ENCODE measurements at regions of chr3 and their contacts with region 1.

Region 1: GRCh38 chr3:152268555-152269425 is at the start of gene MBNL1:
- DNase-seq: peak; percentile 93
- ATAC-seq: peak; percentile 70
- H3K4me3 ChIP-seq: peak within 1 kb of the TSS; percentile 91 to 100 (median 93)
- H3K4me3 Mint-ChIP-seq: peak within 1 kb of the TSS; percentile 87
- H3K27ac ChIP-seq: peak within 1 kb of the TSS; percentile 86 to 93
- H3K27ac Mint-ChIP-seq: peak within 1 kb of the TSS; percentile 96
- H3K4me1 ChIP-seq: peaks cover 29 to 49% of the 10 kb centered on the region in 2 donors
- H3K4me1 Mint-ChIP-seq: peaks cover 63% of the 10 kb centered on the region
- H3K27me3 ChIP-seq: no peaks in the 10 kb centered on the region
- H3K27me3 Mint-ChIP-seq: no peaks in the 10 kb centered on the region
- CTCF ChIP-seq: no peak
- total RNA-seq, gene MBNL1: 505 and 514 TPM in 2 replicates

Region 2: GRCh38 chr3:152193673-152194267 is 75.0 kb before region 1 on chr3:
- CTCF ChIA-PET with region 1: interaction called, 7 read pairs
- POLR2A ChIA-PET with region 1: interaction called, 52 read pairs
- intact Hi-C with region 1: no loop called
- DNase-seq: peak; percentile 57
- ATAC-seq: peak; percentile 52
- H3K4me3 ChIP-seq: peak overlapping the region; percentile 13 to 73 (median 51)
- H3K4me3 Mint-ChIP-seq: peak overlapping the region; percentile 91
- H3K27ac ChIP-seq: peak overlapping the region; percentile 27 to 59
- H3K27ac Mint-ChIP-seq: peak overlapping the region; percentile 91
- H3K4me1 ChIP-seq: peaks cover 48 to 53% of the 10 kb centered on the region in 2 donors
- H3K4me1 Mint-ChIP-seq: peaks cover 66% of the 10 kb centered on the region
- H3K27me3 ChIP-seq: no peaks in the 10 kb centered on the region
- H3K27me3 Mint-ChIP-seq: no peaks in the 10 kb centered on the region
- CTCF ChIP-seq: no peak

Region 3: DNA sequence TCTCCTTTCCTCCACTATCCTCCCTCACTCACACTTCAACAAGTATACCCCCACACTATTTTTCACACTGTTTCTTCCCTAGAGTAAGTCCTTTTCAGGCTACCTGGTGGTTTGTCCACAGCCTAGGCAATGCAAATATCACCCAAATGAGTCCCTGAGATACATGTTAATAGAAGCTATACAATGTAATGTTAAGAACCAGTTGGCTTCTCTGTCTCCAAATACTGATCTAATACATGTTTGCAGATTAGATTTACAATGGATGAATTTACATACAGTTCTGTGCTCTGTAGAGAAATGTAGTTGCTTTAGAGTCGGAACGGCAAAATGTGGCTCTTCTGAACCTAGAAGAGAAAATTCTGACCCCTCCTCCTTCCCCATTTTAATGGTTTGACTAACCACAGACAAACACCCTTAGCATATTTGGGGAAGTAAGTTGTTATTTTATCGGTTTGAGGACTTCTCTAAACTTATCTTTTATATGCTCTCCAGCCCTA is 63.6 kb before region 1 on chr3:
- CTCF ChIA-PET with region 1: interaction called, 29 read pairs
- POLR2A ChIA-PET with region 1: interaction called, 52 read pairs
- intact Hi-C with region 1: loop called (anchors 1 kb)
- DNase-seq: peak; percentile 87
- ATAC-seq: peak; percentile 82
- H3K4me3 ChIP-seq: peak overlapping the region; percentile 66 to 97 (median 72)
- H3K4me3 Mint-ChIP-seq: peak overlapping the region; percentile 95
- H3K27ac ChIP-seq: peak overlapping the region; percentile 83 to 92
- H3K27ac Mint-ChIP-seq: peak overlapping the region; percentile 96
- H3K4me1 ChIP-seq: peaks cover 21 to 40% of the 10 kb centered on the region in 2 donors
- H3K4me1 Mint-ChIP-seq: peaks cover 46% of the 10 kb centered on the region
- H3K27me3 ChIP-seq: no peaks in the 10 kb centered on the region
- H3K27me3 Mint-ChIP-seq: no peaks in the 10 kb centered on the region
- CTCF ChIP-seq: no peak

Region 4: GRCh38 chr3:152258448-152259393 is 10.1 kb before region 1 on chr3:
- CTCF ChIA-PET with region 1: interaction called, 11 read pairs
- POLR2A ChIA-PET with region 1: interaction called, 40 read pairs
- intact Hi-C with region 1: loop called (anchors 1 kb)
- DNase-seq: no peak
- ATAC-seq: peak; percentile 10
- H3K4me3 ChIP-seq: peak overlapping the region in 1 of 5 experiments; percentile 23
- H3K4me3 Mint-ChIP-seq: peak overlapping the region; percentile 72
- H3K27ac ChIP-seq: peak overlapping the region; percentile 22 to 59
- H3K27ac Mint-ChIP-seq: peak overlapping the region; percentile 89
- H3K4me1 ChIP-seq: peaks cover 62 to 65% of the 10 kb centered on the region in 2 donors
- H3K4me1 Mint-ChIP-seq: peaks cover 71% of the 10 kb centered on the region
- H3K27me3 ChIP-seq: no peaks in the 10 kb centered on the region
- H3K27me3 Mint-ChIP-seq: no peaks in the 10 kb centered on the region
- CTCF ChIP-seq: no peak

Region 5: DNA sequence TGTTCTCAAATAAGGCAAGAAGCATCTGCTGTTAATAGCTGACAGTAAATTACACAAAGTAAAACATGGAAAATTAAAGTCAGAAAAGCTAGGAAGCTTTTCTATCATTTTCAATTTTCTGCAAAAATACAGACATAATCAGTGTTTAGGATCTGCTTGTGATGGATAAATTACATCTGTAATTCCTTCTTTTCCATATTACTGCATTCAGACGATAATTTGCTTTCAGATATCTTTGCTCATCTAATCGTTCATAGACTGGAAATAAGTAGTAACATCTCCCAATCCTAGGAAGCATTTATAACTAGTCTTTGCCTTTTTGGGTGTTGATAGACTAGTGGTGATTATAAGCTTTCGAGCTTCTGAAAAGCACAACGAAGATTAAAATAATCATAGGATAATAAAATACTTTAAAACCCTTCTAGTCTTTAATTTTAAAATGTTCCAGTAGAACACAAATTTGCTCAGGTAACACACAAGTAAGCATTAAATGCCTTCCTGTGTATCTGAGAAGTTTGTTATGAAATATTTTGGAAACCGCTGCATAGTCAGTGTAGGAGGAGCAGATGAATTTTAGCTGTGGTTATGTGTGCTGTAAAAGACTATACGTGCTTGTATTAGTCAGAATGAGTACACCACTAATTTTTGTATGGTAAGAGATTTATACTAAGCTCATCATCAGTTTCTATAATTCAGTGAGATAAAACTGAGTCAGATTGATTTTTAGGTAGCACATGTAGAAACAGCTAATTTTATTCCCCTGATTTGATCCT is 40.9 kb after region 1 on chr3:
- CTCF ChIA-PET with region 1: interaction called, 3 read pairs
- POLR2A ChIA-PET with region 1: no interaction called
- intact Hi-C with region 1: loop called (anchors 5 kb)
- DNase-seq: no peak
- ATAC-seq: no peak
- H3K4me3 ChIP-seq: no peak overlapping the region
- H3K4me3 Mint-ChIP-seq: no peak overlapping the region
- H3K27ac ChIP-seq: peak overlapping the region in 1 of 2 donors; percentile 60
- H3K27ac Mint-ChIP-seq: peak overlapping the region; percentile 50
- H3K4me1 ChIP-seq: peaks cover 20 to 23% of the 10 kb centered on the region in 2 donors
- H3K4me1 Mint-ChIP-seq: peaks cover 58% of the 10 kb centered on the region
- H3K27me3 ChIP-seq: no peaks in the 10 kb centered on the region
- H3K27me3 Mint-ChIP-seq: no peaks in the 10 kb centered on the region
- CTCF ChIP-seq: no peak

Region 6: DNA sequence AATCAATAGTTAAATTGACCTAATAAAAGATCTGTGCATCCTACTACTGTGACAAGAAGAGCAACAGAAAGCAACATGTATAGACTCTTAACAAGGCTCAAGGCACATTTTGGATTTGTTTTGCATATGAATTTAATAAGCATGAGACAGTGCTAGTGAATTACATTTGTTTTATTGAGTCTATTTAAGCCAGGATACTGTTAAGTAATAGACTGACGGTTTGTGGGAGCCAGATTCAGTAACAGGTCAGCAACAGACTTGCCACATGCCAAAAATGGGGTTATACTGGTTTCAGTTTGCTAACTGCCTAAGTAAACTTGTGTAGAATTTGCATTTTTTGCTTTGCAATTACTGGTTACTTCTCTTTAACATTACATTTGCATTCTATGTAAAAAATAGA is 54.0 kb after region 1 on chr3:
- CTCF ChIA-PET with region 1: no interaction called
- POLR2A ChIA-PET with region 1: no interaction called
- intact Hi-C with region 1: no loop called
- DNase-seq: peak; percentile 39
- ATAC-seq: no peak
- H3K4me3 ChIP-seq: no peak overlapping the region
- H3K4me3 Mint-ChIP-seq: peak overlapping the region; percentile 55
- H3K27ac ChIP-seq: peak overlapping the region in 1 of 2 donors; percentile 66
- H3K27ac Mint-ChIP-seq: peak overlapping the region; percentile 18
- H3K4me1 ChIP-seq: peaks cover 24 to 53% of the 10 kb centered on the region in 2 donors
- H3K4me1 Mint-ChIP-seq: peaks cover 64% of the 10 kb centered on the region
- H3K27me3 ChIP-seq: no peaks in the 10 kb centered on the region
- H3K27me3 Mint-ChIP-seq: no peaks in the 10 kb centered on the region
- CTCF ChIP-seq: no peak

Region 7: DNA sequence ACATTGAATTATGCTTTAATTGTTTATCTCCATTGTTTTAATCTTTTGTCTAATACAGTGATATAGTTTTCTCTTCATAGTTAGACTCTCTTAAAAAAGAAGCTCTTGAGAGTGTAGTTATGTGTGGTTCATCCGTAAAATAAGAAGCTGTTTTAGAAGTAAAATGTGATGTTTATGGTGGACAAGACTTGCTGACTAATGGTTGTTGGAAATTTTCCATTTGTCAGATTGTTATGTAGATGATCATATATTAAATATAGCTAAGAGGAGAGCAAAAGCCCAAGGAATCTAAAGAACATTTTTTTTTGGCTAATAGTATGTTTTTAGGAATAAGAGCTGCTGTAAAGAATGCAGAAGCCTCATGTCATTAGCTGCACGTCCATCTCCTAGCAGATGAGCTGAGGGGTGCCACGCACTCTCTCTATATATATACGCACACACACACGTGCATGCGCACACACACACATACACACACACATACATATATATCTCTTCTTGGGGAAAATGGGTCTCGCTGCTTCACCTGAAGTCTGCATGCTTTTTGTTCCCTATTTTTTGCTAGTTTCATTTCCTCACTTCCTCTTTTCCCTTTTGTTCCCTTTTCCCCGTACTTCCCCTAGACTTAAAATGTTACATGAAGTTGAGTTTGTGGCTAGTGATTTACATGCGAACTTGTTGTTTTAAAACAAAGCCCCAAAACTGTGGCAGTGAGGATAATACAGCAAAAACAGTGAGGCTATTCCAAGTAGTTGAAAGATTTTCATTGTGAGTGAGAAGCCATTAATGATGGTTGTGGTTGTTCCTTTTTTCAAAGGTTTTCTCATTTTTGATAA is 107.8 kb after region 1 on chr3:
- CTCF ChIA-PET with region 1: no interaction called
- POLR2A ChIA-PET with region 1: no interaction called
- intact Hi-C with region 1: loop called (anchors 1 kb)
- DNase-seq: peak; percentile 95
- ATAC-seq: peak; percentile 95
- H3K4me3 ChIP-seq: peak overlapping the region in 1 of 5 experiments; percentile 35
- H3K4me3 Mint-ChIP-seq: peak overlapping the region; percentile 59
- H3K27ac ChIP-seq: peak overlapping the region; percentile 67 to 83
- H3K27ac Mint-ChIP-seq: peak overlapping the region; percentile 87
- H3K4me1 ChIP-seq: peaks cover 50 to 70% of the 10 kb centered on the region in 2 donors
- H3K4me1 Mint-ChIP-seq: peaks cover 68% of the 10 kb centered on the region
- H3K27me3 ChIP-seq: no peaks in the 10 kb centered on the region
- H3K27me3 Mint-ChIP-seq: no peaks in the 10 kb centered on the region
- CTCF ChIP-seq: no peak

Region 8: GRCh38 chr3:153023896-153024295 is 755.1 kb after region 1 on chr3:
- CTCF ChIA-PET with region 1: no interaction called
- POLR2A ChIA-PET with region 1: no interaction called
- intact Hi-C with region 1: no loop called
- DNase-seq: no peak
- ATAC-seq: no peak
- H3K4me3 ChIP-seq: no peak overlapping the region
- H3K4me3 Mint-ChIP-seq: no peak overlapping the region
- H3K27ac ChIP-seq: no peak overlapping the region
- H3K27ac Mint-ChIP-seq: no peak overlapping the region
- H3K4me1 ChIP-seq: no peaks in the 10 kb centered on the region
- H3K4me1 Mint-ChIP-seq: no peaks in the 10 kb centered on the region
- H3K27me3 ChIP-seq: no peaks in the 10 kb centered on the region
- H3K27me3 Mint-ChIP-seq: peaks cover 15% of the 10 kb centered on the region
- CTCF ChIP-seq: no peak

Measured in B cell (primary cell).